Left lung (tissue), 14 donors: ENCODE measurements at regions of chr2 and their contacts with region 1.

Region 1: DNA sequence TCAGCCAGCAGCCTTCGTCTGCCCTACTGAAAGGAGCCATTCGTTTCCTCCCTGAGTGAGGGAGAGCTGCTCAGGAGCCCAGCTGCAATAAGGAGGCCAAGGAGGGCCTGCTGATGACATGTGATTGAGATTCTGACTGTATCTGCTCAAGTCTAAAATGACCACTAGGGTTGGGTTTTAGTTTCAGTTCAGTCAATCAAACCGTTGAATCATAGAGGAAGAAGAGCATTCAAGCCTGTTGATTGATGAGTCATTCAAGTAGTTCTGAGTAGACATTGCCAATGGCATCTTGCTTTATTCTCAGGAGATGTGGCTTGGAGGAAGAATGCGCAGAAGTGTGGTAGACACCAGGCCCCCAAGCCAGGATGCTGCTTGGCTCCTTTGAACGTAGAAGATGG is 19.9 kb upstream of the BCL2L11 start:
- DNase-seq: no peak
- ATAC-seq: peak; percentile 31
- H3K4me3 ChIP-seq: no peak overlapping the region
- H3K27ac ChIP-seq: no peak overlapping the region
- H3K4me1 ChIP-seq: no peaks in the 10 kb centered on the region
- H3K27me3 ChIP-seq: no peaks in the 10 kb centered on the region
- CTCF ChIP-seq: no peak

Region 2: GRCh38 chr2:110818767-110819481 is 281.8 kb before region 1 on chr2:
- intact Hi-C with region 1: loop called in 1 of 2 experiments (anchors 10 kb)
- DNase-seq: no peak
- ATAC-seq: no peak
- H3K4me3 ChIP-seq: no peak overlapping the region
- H3K27ac ChIP-seq: no peak overlapping the region
- H3K4me1 ChIP-seq: no peaks in the 10 kb centered on the region
- H3K27me3 ChIP-seq: no peaks in the 10 kb centered on the region
- CTCF ChIP-seq: no peak

Region 3: DNA sequence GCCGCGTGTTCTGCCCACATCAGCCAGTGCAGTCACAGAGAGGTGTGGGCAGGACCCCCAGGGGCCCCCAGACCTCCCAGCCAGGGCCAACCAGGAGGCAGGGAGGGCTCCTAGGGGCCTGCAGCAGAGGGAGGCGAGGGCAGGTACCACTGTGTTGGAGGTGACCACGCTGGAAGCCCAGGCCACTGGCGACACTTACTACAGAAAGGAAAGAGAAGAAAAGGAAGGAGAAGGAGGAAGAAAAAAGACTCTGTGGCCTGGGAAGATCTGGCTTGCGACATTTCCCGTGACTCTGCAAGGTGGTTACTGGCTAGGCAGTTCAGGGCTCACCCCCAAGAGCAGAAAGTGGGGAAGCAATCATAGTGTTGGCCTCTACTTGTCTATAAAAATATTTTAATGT is 78.1 kb before region 1 on chr2:
- intact Hi-C with region 1: no loop called
- DNase-seq: peak in 1 of 4 donors; percentile 71
- ATAC-seq: no peak
- H3K4me3 ChIP-seq: no peak overlapping the region
- H3K27ac ChIP-seq: peak overlapping the region in 1 of 2 donors; percentile 81
- H3K4me1 ChIP-seq: peaks cover 0 to 18% of the 10 kb centered on the region in 2 donors
- H3K27me3 ChIP-seq: no peaks in the 10 kb centered on the region
- CTCF ChIP-seq: no peak